WTC11 (cell line): ENCODE measurements at regions of chr20 and their contacts with region 1.

Region 1: DNA sequence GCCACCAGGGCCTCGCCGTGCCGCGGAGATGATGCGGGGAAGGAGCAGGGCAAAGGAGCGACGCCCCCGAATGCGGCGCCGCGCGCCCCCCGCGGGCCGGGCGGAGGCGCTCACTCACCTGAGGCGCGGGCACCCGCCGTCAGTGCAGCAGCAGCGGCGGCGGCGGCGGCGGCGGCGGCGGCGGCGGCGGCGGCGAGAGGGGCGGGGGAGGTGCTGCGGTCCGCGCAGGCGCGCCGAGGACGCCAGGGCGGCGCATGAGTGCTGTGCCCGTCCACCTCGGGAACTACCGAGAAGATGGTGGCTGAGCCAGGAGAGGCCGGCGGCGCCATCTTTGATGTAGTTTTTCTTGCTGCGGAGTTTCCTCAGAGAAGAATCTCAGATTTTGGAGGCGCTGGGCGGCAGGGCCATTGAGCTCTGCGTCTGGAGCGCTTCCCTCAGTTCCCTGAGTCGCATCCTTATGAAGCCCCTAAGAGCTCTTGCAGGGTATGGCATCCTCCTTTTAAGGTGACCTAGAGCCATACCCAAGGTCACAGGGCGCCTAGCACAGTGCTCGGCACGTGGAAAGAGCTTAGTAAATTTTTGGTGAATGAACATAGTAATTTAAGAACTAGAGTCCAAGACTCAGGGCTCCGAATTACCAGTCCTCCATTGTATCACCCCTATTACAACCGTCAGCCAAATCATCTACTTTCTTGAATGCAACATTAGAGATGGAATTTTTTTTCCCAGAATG is at the start of gene NDRG3:
- DNase-seq: peak; percentile 97
- ATAC-seq: peak; percentile 96
- H3K4me3 Mint-ChIP-seq: peak within 1 kb of the TSS; percentile 93
- H3K27ac Mint-ChIP-seq: peak within 1 kb of the TSS; percentile 94
- H3K4me1 Mint-ChIP-seq: peaks cover 20% of the 10 kb centered on the region
- H3K27me3 Mint-ChIP-seq: no peaks in the 10 kb centered on the region
- CTCF ChIP-seq: no peak
- total RNA-seq, gene NDRG3: 26.0 to 27.0 TPM (median 26.3 TPM) in 3 replicates

Region 2: GRCh38 chr20:36728986-36729385 is 17.1 kb before region 1 on chr20:
- CTCF ChIA-PET with region 1: interaction called, 19 read pairs
- POLR2A ChIA-PET with region 1: interaction called, 3 read pairs
- DNase-seq: no peak
- ATAC-seq: peak; percentile 86
- H3K4me3 Mint-ChIP-seq: no peak overlapping the region
- H3K27ac Mint-ChIP-seq: peak overlapping the region; percentile 34
- H3K4me1 Mint-ChIP-seq: peaks cover 13% of the 10 kb centered on the region
- H3K27me3 Mint-ChIP-seq: no peaks in the 10 kb centered on the region
- CTCF ChIP-seq: no peak

Region 3: DNA sequence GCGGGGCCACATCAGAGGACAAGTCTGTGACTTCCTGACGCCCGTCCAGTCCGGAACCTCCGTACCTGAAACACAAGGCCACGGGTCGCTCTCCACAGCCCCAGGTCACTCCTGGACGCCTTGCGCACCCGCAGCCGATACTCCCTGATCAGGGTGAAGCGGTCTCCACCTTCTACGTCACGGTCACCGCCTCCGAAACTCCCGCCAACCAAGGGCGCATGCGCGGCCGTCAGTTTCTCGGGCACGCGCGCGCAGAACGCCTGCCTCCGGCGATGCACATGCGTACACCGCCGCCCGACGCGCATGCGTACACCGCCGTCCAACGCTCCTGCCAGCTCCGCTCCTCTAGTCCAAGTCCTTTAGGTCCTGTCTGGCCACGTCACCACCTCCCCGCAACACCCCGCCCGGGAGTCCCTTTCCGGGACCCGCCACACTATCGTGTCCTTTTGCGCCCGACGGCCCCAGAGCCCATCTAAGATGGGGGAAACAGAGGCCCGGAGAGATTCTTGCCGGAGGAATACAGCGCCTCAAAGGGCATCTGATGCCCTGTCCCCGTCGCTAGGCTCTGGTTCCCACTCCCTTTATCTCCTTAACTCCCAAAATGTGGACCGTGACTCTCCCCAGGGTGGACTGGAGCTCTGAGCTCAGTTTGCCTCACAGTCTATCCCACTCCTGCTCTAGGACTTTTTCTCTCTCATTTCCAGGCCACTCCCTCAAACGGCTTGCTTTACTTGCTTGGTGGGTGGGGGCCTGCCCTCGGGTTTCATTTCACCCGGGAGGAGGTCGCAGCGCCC is 27.7 kb after region 1 on chr20 and contains the start of gene DSN1:
- CTCF ChIA-PET with region 1: interaction called, 14 read pairs
- POLR2A ChIA-PET with region 1: interaction called, 3 read pairs
- DNase-seq: peak; percentile 99
- ATAC-seq: peak; percentile 80
- H3K4me3 Mint-ChIP-seq: peak within 1 kb of the TSS; percentile 90
- H3K27ac Mint-ChIP-seq: peak within 1 kb of the TSS; percentile 100
- H3K4me1 Mint-ChIP-seq: peaks cover 7% of the 10 kb centered on the region
- H3K27me3 Mint-ChIP-seq: peaks cover 2% of the 10 kb centered on the region; the same call in 1 of the 2 replicates
- CTCF ChIP-seq: no peak
- total RNA-seq, gene DSN1: 26.0 to 27.0 TPM (median 26.9 TPM) in 3 replicates

Region 4: GRCh38 chr20:36856691-36857635 is 110.9 kb after region 1 on chr20:
- CTCF ChIA-PET with region 1: no interaction called
- POLR2A ChIA-PET with region 1: no interaction called
- DNase-seq: no peak
- ATAC-seq: no peak
- H3K4me3 Mint-ChIP-seq: no peak overlapping the region
- H3K27ac Mint-ChIP-seq: peak overlapping the region; percentile 35; the same call in 1 of the 2 replicates
- H3K4me1 Mint-ChIP-seq: peaks cover 52% of the 10 kb centered on the region
- H3K27me3 Mint-ChIP-seq: peaks cover 7% of the 10 kb centered on the region
- CTCF ChIP-seq: no peak